HepG2 (cell line): ENCODE measurements at regions of chrX and their contacts with region 1.

Region 1: DNA sequence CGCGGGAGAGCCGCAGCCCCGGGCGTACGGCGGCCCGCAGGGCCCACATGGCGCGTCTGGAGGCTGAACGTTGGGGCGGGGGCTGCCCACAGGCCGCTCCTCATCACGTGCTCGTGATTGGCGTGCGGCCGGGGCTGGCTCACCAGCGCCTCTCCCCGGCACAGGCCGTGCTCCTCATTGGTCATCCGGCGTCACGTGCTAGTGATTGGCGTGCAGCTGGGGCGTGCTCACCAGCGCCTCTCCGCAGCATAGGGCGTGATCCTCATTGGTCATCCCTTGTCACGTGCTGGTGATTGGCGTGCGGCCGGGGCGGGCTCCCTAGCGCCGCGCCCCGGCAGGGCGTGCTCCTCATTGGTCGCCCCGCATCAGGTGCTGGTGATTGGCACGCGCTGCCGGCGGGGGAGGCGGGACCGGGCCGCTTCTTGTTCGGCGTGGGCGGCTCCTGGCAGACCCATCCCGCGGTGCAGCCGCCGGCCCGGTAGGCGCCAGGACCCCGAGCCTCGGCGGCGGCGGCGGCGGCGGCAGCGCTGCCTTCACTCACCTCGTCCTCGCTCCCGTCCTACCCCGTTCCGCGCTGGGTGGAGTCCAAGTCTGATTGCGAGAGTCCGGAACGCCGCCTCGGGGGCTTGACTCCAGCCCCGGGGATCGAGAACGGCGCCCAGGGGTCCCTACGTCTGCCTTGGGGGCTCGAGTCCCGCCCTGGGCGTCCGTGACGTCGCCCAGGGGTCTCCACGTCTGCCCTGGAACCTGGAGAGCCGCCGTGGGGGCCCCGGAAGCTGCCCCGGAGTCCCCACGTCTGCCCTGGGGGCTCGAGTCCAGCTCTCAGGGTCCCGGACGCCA is at the start of gene GTPBP6:
- DNase-seq: peak; percentile 98
- ATAC-seq: peak; percentile 75
- H3K4me3 ChIP-seq: peak within 1 kb of the TSS; percentile 73 to 88 (median 83)
- H3K27ac ChIP-seq: peak within 1 kb of the TSS; percentile 91
- H3K4me1 ChIP-seq: peaks cover 27% of the 10 kb centered on the region
- H3K27me3 ChIP-seq: no peaks in the 10 kb centered on the region
- CTCF ChIP-seq: peak; percentile 73
- EP300 ChIP-seq: no peak
- POLR2A ChIP-seq: 0 out of 4 replicates have a peak, but pooled peaks of 1 of the 2 experiments have one; percentile 39
- RAD21 ChIP-seq: no peak
- total RNA-seq, gene GTPBP6: 35.6 and 39.6 TPM in 2 replicates

Region 2: GRCh38 chrX:275967-276580 is 42.9 kb before region 1 on chrX:
- CTCF ChIA-PET with region 1: no interaction called
- POLR2A ChIA-PET with region 1: no interaction called
- in situ Hi-C with region 1: loop called (anchors 5 kb)
- intact Hi-C with region 1: loop called (anchors 5 kb)
- DNase-seq: peak; percentile 73
- ATAC-seq: peak; percentile 86
- H3K4me3 ChIP-seq: peak overlapping the region; percentile 91 to 100 (median 99)
- H3K27ac ChIP-seq: peak overlapping the region; percentile 88
- H3K4me1 ChIP-seq: peaks cover 24% of the 10 kb centered on the region
- H3K27me3 ChIP-seq: no peaks in the 10 kb centered on the region; a peak in 1 of 5 replicates
- CTCF ChIP-seq: peak; percentile 15; the same call in 1 of the 2 replicates
- EP300 ChIP-seq: 0 out of 4 replicates have a peak, but pooled peaks of 1 of the 2 experiments have one; percentile 16
- POLR2A ChIP-seq: peak in 1 of 2 experiments; percentile 97; a peak in 2 of 4 replicates
- RAD21 ChIP-seq: no peak